Colonic mucosa (tissue), 4 donors: ENCODE measurements at regions of chr16 and their contacts with region 1.

Region 1: DNA sequence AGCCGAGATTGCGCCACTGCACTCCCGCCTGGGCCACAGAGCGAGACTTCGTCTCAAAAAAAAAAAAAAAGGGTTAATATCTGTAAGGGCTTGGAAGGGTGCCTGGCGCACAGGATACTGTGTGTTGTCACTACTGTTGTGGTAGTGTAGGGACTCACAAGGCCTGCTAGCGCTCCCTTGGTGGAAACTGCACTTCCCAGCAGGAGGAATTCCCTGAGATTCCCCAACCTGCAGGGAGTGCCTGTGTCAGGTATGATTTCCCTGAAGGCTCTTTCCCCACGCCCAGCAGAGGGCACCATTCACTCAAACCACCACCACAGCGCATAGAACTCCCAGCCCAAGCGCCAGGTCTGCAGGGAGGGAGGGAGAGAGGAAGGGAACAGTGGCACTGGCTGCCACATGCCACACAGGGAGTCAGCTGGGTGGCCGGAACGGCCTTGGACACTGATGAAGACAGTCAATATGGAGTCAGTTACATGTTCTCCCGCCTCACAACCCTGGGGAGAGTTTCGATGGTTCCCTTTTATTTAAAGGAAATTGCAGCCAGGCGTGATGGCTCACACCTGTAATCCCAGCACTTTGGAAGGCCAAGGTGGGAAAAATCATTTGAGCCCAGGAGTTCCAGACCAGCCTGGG is 32.7 kb upstream of the CDH1 start:
- DNase-seq: peak; percentile 93
- H3K4me3 ChIP-seq: no peak overlapping the region
- H3K27ac ChIP-seq: no peak overlapping the region
- H3K4me1 ChIP-seq: peaks cover 3% of the 10 kb centered on the region
- H3K27me3 ChIP-seq: no peaks in the 10 kb centered on the region
- CTCF ChIP-seq: peak; percentile 79

Region 2: GRCh38 chr16:68499006-68499405 is 205.3 kb before region 1 on chr16:
- intact Hi-C with region 1: no loop called
- DNase-seq: no peak
- H3K4me3 ChIP-seq: no peak overlapping the region
- H3K27ac ChIP-seq: no peak overlapping the region
- H3K4me1 ChIP-seq: no peaks in the 10 kb centered on the region
- H3K27me3 ChIP-seq: no peaks in the 10 kb centered on the region
- CTCF ChIP-seq: no peak

Region 3: DNA sequence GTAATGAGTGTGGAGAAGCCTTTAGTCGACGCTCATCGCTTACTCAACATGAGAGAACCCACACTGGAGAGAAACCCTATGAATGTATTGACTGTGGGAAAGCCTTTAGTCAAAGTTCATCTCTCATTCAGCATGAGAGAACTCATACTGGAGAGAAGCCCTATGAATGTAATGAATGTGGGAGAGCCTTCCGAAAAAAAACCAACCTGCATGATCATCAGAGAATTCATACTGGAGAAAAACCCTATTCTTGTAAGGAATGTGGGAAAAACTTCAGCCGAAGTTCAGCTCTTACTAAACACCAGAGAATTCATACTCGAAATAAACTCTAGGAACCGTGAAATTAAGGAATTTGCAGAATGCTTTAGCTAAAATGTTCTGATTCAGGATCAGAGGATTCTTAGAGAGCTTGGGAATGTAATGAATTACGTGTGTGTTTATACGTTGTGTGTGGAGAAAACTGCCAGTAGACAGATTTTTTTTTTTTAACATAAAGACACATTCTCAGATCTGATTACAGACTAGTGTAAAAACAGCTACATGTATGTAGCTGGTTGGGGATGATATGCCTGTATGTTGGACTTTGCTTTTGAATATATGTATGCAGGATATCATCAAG is 139.9 kb before region 1 on chr16:
- intact Hi-C with region 1: no loop called
- DNase-seq: no peak
- H3K4me3 ChIP-seq: no peak overlapping the region
- H3K27ac ChIP-seq: no peak overlapping the region
- H3K4me1 ChIP-seq: no peaks in the 10 kb centered on the region
- H3K27me3 ChIP-seq: no peaks in the 10 kb centered on the region
- CTCF ChIP-seq: no peak

Region 4: GRCh38 chr16:68800257-68800875 is 96.0 kb after region 1 on chr16:
- intact Hi-C with region 1: loop called (anchors 5 kb)
- DNase-seq: peak; percentile 64
- H3K4me3 ChIP-seq: no peak overlapping the region
- H3K27ac ChIP-seq: no peak overlapping the region
- H3K4me1 ChIP-seq: no peaks in the 10 kb centered on the region
- H3K27me3 ChIP-seq: no peaks in the 10 kb centered on the region
- CTCF ChIP-seq: peak; percentile 45

Region 5: DNA sequence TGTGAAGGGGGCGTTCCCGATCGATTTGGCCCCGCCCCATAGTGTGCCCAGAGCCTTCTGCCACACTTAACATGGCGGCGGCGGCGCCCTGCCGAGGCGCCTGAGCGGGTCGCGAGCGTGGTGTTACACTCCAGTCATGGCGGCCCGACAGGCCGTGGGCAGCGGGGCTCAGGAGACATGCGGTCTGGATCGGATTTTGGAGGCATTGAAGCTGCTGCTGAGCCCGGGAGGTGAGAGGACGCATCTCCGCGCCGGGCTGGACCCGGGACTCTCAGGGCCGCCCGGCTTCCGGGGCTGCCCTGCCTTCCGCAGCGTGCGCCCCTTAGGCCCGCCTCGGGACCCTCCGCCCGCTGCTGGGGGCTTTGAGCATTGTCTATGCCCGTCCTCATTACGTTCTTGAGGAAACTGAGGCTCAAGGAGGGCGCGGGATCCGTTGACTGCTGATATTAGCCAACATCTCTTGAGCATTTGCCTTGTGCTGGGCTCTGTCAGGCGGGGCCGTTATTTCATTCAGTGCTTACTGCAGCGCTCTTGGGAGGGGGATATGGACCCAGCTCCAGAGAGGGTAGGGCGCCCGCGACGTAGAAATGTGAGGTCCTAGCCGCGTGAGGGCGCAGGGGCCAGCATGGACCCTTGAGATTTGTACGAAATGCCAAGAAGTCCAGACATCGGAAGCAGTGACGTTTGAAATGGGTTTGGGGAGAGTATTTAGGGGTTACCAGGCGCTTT is 139.3 kb after region 1 on chr16 and contains the start of gene TANGO6:
- intact Hi-C with region 1: loop called (anchors 10 kb)
- DNase-seq: peak; percentile 88
- H3K4me3 ChIP-seq: peak within 1 kb of the TSS; percentile 84
- H3K27ac ChIP-seq: peak within 1 kb of the TSS; percentile 54
- H3K4me1 ChIP-seq: no peaks in the 10 kb centered on the region
- H3K27me3 ChIP-seq: no peaks in the 10 kb centered on the region
- CTCF ChIP-seq: no peak
- total RNA-seq, gene TANGO6: 6.6 to 10.1 TPM